Caco-2 (cell line): ENCODE measurements at regions of chr12 and their contacts with region 1.

Region 1: DNA sequence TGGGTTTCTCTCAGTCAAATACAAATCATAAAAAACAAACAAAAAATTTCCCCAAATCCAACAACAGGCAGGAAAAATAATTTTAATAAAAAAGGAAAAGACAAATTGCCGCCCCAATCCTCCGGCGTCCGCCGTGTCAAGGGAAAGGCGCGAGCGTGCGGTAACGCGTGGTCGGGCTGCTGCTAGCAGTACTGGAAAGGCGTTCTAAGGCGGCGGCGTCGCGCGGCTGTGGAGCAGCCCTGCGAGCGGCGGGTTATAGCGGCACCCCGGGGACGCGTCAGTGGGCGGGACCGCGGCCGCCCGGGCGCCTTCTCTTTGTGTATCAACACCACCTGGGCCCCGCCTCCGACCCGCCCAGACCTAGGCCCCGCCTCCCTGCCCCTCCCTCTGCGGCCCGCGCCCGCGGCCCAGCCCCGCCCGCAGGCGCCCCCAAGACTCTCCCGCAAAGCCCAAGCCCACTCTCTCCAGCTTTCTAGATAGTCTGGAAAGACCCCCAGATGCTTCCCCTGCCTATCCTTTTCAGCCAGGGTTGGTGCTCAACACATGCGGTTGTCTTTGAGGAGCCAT is at the start of gene SLC38A2:
- DNase-seq: peak; percentile 96 to 99
- H3K4me3 ChIP-seq: peak within 1 kb of the TSS; percentile 83
- H3K4me3 Mint-ChIP-seq: peak within 1 kb of the TSS; percentile 76
- H3K27ac Mint-ChIP-seq: peak within 1 kb of the TSS; percentile 100
- H3K4me1 ChIP-seq: peaks cover 45% of the 10 kb centered on the region
- H3K4me1 Mint-ChIP-seq: peaks cover 35% of the 10 kb centered on the region
- H3K27me3 ChIP-seq: no peaks in the 10 kb centered on the region
- H3K27me3 Mint-ChIP-seq: no peaks in the 10 kb centered on the region
- CTCF ChIP-seq: no peak
- total RNA-seq, gene SLC38A2: 317 and 331 TPM in 2 replicates

Region 2: GRCh38 chr12:46268590-46269558 is 103.8 kb before region 1 on chr12 and contains the start of gene SLC38A1:
- CTCF ChIA-PET with region 1: no interaction called
- POLR2A ChIA-PET with region 1: no interaction called
- intact Hi-C with region 1: loop called (anchors 1 kb)
- DNase-seq: peak; percentile 94 to 95
- H3K4me3 ChIP-seq: peak within 1 kb of the TSS; percentile 78
- H3K4me3 Mint-ChIP-seq: no peak within 1 kb of the TSS
- H3K27ac Mint-ChIP-seq: no peak within 1 kb of the TSS
- H3K4me1 ChIP-seq: peaks cover 33% of the 10 kb centered on the region
- H3K4me1 Mint-ChIP-seq: no peaks in the 10 kb centered on the region
- H3K27me3 ChIP-seq: no peaks in the 10 kb centered on the region
- H3K27me3 Mint-ChIP-seq: no peaks in the 10 kb centered on the region
- CTCF ChIP-seq: no peak
- total RNA-seq, gene SLC38A1: 245 and 259 TPM in 2 replicates

Region 3: GRCh38 chr12:46388427-46389021 is 15.9 kb after region 1 on chr12:
- CTCF ChIA-PET with region 1: no interaction called
- POLR2A ChIA-PET with region 1: interaction called, 14 read pairs
- intact Hi-C with region 1: loop called (anchors 1 kb)
- DNase-seq: no peak
- H3K4me3 ChIP-seq: no peak overlapping the region
- H3K4me3 Mint-ChIP-seq: no peak overlapping the region
- H3K27ac Mint-ChIP-seq: no peak overlapping the region
- H3K4me1 ChIP-seq: peaks cover 69% of the 10 kb centered on the region
- H3K4me1 Mint-ChIP-seq: peaks cover 33% of the 10 kb centered on the region
- H3K27me3 ChIP-seq: no peaks in the 10 kb centered on the region
- H3K27me3 Mint-ChIP-seq: no peaks in the 10 kb centered on the region
- CTCF ChIP-seq: no peak

Region 4: GRCh38 chr12:46465307-46465706 is 92.7 kb after region 1 on chr12:
- CTCF ChIA-PET with region 1: no interaction called
- POLR2A ChIA-PET with region 1: no interaction called
- intact Hi-C with region 1: no loop called
- DNase-seq: no peak
- H3K4me3 ChIP-seq: no peak overlapping the region
- H3K4me3 Mint-ChIP-seq: no peak overlapping the region
- H3K27ac Mint-ChIP-seq: no peak overlapping the region
- H3K4me1 ChIP-seq: peaks cover 9% of the 10 kb centered on the region; the same call in 1 of the 2 replicates
- H3K4me1 Mint-ChIP-seq: peaks cover 5% of the 10 kb centered on the region
- H3K27me3 ChIP-seq: no peaks in the 10 kb centered on the region
- H3K27me3 Mint-ChIP-seq: no peaks in the 10 kb centered on the region
- CTCF ChIP-seq: no peak

Region 5: GRCh38 chr12:46492471-46493351 is 120.1 kb after region 1 on chr12:
- CTCF ChIA-PET with region 1: no interaction called
- POLR2A ChIA-PET with region 1: no interaction called
- intact Hi-C with region 1: loop called (anchors 1 kb)
- DNase-seq: peak; percentile 80 to 83
- H3K4me3 ChIP-seq: no peak overlapping the region
- H3K4me3 Mint-ChIP-seq: peak overlapping the region; percentile 53
- H3K27ac Mint-ChIP-seq: peak overlapping the region; percentile 79
- H3K4me1 ChIP-seq: peaks cover 52% of the 10 kb centered on the region
- H3K4me1 Mint-ChIP-seq: peaks cover 25% of the 10 kb centered on the region
- H3K27me3 ChIP-seq: no peaks in the 10 kb centered on the region
- H3K27me3 Mint-ChIP-seq: no peaks in the 10 kb centered on the region
- CTCF ChIP-seq: no peak

Region 6: GRCh38 chr12:46661110-46661845 is 288.7 kb after region 1 on chr12:
- CTCF ChIA-PET with region 1: interaction called, 18 read pairs
- POLR2A ChIA-PET with region 1: interaction called, 3 read pairs
- intact Hi-C with region 1: loop called (anchors 1 kb)
- DNase-seq: peak in 1 of 2 experiments; percentile 72
- H3K4me3 ChIP-seq: no peak overlapping the region
- H3K4me3 Mint-ChIP-seq: no peak overlapping the region
- H3K27ac Mint-ChIP-seq: no peak overlapping the region
- H3K4me1 ChIP-seq: peaks cover 16% of the 10 kb centered on the region
- H3K4me1 Mint-ChIP-seq: peaks cover 26% of the 10 kb centered on the region
- H3K27me3 ChIP-seq: no peaks in the 10 kb centered on the region
- H3K27me3 Mint-ChIP-seq: no peaks in the 10 kb centered on the region
- CTCF ChIP-seq: peak; percentile 76 to 91